Breast epithelium (tissue), 4 donors: ENCODE measurements at regions of chrX and their contacts with region 1.

Region 1: GRCh38 chrX:68652326-68653170 is 5.1 kb downstream of the STARD8 start:
- DNase-seq: no peak
- H3K4me3 ChIP-seq: no peak overlapping the region
- H3K27ac ChIP-seq: no peak overlapping the region
- H3K4me1 ChIP-seq: no peaks in the 10 kb centered on the region
- H3K27me3 ChIP-seq: peaks cover 0 to 57% of the 10 kb centered on the region in 2 donors
- CTCF ChIP-seq: no peak
- POLR2A ChIP-seq: no peak

Region 2: GRCh38 chrX:68672581-68673318 is 20.2 kb after region 1 on chrX:
- intact Hi-C with region 1: loop called (anchors 1 kb)
- DNase-seq: no peak
- H3K4me3 ChIP-seq: no peak overlapping the region
- H3K27ac ChIP-seq: peak overlapping the region; percentile 29 to 79
- H3K4me1 ChIP-seq: peaks cover 0 to 3% of the 10 kb centered on the region in 2 donors
- H3K27me3 ChIP-seq: peaks cover 0 to 42% of the 10 kb centered on the region in 2 donors
- CTCF ChIP-seq: no peak
- POLR2A ChIP-seq: no peak

Region 3: GRCh38 chrX:68693481-68694434 is 41.2 kb after region 1 on chrX:
- intact Hi-C with region 1: loop called (anchors 1 kb)
- DNase-seq: peak in 1 of 2 donors; percentile 38
- H3K4me3 ChIP-seq: peak overlapping the region; percentile 58 to 73 (median 60)
- H3K27ac ChIP-seq: peak overlapping the region; percentile 21 to 81
- H3K4me1 ChIP-seq: no peaks in the 10 kb centered on the region
- H3K27me3 ChIP-seq: peaks cover 0 to 62% of the 10 kb centered on the region in 2 donors
- CTCF ChIP-seq: no peak
- POLR2A ChIP-seq: no peak